Psoas muscle (tissue), 8 donors: ENCODE measurements at regions of chr14 and their contacts with region 1.

Region 1: DNA sequence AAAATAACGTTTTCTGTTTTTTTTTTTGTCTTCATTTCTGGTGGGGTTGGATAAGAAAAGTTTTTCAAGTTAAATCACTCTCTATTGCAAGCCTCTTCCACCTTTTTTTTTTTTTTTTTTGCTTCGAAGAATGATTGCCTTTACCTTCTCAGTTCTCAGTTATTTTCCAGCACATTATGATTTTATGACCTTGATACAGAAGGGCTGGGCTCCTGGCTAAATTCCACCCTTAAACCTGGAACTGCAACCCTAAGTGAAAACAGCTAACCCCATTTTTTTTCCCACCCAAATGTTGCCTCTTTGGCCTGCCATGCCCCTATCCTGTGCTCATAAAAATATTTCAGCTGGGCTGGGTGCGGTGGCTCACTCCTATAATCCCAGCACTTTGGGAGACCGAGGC is 31.4 kb downstream of the PSEN1 start:
- DNase-seq: no peak
- ATAC-seq: no peak
- H3K4me3 ChIP-seq: no peak overlapping the region
- H3K27ac ChIP-seq: no peak overlapping the region
- H3K4me1 ChIP-seq: no peaks in the 10 kb centered on the region
- H3K27me3 ChIP-seq: no peaks in the 10 kb centered on the region
- CTCF ChIP-seq: no peak

Region 2: DNA sequence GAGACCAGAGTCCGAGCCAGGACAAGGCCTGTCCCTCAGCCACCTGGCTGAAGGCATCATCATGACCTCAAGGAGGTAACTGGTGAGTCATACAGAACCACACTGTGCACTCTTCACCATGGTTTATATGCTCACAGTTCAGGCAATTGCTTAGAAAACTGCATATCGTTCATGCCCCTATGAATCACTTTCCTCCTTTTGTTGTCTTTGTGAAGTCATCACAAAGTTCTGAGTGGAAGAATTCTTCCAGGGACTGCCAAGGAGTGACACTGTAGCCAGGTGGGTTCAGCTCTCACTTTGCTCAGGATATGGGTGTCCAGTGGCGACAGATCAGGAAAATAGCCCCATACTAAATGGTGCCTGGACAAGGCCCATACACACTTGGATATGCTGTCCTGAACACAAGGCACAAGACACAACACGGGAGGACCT is 366.3 kb before region 1 on chr14:
- intact Hi-C with region 1: no loop called
- DNase-seq: no peak
- ATAC-seq: peak; percentile 88 to 91 (median 90)
- H3K4me3 ChIP-seq: no peak overlapping the region
- H3K27ac ChIP-seq: peak overlapping the region; percentile 89
- H3K4me1 ChIP-seq: peaks cover 48% of the 10 kb centered on the region
- H3K27me3 ChIP-seq: no peaks in the 10 kb centered on the region
- CTCF ChIP-seq: no peak

Region 3: GRCh38 chr14:73189651-73190050 is 21.9 kb after region 1 on chr14:
- intact Hi-C with region 1: loop called in 1 of 2 experiments (anchors 2 kb)
- DNase-seq: no peak
- ATAC-seq: peak in 3 of 4 donors; percentile 44 to 68 (median 54)
- H3K4me3 ChIP-seq: no peak overlapping the region
- H3K27ac ChIP-seq: no peak overlapping the region
- H3K4me1 ChIP-seq: no peaks in the 10 kb centered on the region
- H3K27me3 ChIP-seq: no peaks in the 10 kb centered on the region
- CTCF ChIP-seq: no peak

Region 4: DNA sequence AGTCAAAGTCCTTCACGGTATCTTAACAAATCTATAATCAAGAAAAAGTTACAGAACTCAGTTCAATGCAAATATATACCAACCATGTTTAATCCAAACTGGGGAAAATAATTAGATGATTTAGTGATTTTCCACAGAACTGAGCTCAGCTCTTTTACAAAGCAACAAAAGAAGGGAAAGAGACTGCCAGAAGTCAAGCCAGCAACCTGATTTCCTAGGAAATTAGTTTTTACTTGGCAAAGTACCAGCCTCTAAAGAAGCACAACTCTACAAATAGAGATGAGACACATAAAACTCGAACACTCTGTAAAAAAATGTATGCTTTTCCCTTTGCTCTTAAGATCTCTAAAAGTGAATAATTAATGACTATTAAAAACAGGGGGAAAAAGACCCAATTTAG is 271.3 kb after region 1 on chr14:
- intact Hi-C with region 1: no loop called
- DNase-seq: no peak
- ATAC-seq: no peak
- H3K4me3 ChIP-seq: no peak overlapping the region
- H3K27ac ChIP-seq: no peak overlapping the region
- H3K4me1 ChIP-seq: peaks cover 9% of the 10 kb centered on the region
- H3K27me3 ChIP-seq: no peaks in the 10 kb centered on the region
- CTCF ChIP-seq: no peak